GM10248 (cell line): ENCODE measurements at regions of chrX and their contacts with region 1.

Region 1: GRCh38 chrX:153662266-153662665 is 11.3 kb downstream of the PNCK start:
- DNase-seq: peak; percentile 17
- CTCF ChIP-seq: peak; percentile 43

Region 2: GRCh38 chrX:153649178-153649914 is 12.9 kb before region 1 on chrX:
- CTCF ChIA-PET with region 1: interaction called, 13 read pairs
- POLR2A ChIA-PET with region 1: no interaction called
- DNase-seq: peak; percentile 80
- CTCF ChIP-seq: peak; percentile 65

Region 3: DNA sequence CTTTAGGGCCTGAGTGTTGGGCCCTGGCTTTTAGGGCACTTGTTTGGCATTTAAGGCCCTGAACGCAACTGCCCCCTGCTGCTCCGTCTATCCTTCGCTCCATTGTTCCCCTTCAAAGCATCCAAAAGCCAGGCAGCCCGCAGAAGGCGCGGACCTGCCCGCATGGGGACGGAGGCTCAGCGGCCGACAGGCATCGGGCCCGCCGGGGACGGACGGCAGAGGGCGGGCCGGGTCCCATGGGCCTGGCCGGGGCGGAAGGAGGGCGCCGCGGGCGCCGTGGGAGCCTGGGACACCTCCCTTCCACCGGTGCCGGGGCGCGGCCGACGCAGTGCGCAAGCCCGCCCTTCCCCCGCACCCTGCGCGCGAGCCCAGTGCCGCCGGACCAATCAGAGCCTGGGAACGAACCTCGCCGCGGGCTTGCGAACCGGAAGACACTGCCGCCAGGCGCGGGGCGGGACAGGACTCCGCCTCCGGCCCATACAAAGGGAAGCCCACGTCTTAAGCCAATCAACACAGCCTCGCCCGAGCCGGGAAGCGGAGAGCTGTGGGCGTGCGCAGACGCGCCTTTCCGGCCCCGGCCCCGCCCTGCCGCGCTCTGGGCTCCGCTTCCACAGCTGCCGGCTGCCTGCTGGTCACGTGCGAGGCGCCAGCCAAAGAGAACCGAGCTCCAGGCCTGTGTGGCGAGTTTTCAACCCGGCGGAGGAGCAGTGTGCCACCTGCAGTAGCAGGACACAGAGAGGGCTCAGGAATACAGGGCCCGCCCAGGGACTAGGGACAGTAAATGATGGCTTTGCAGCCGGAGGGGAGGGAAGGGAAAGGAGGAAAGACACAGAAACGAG is 265.9 kb after region 1 on chrX:
- CTCF ChIA-PET with region 1: no interaction called
- POLR2A ChIA-PET with region 1: no interaction called
- DNase-seq: peak; percentile 97
- CTCF ChIP-seq: no peak